Prostate gland (tissue), 2 donors: ENCODE measurements at regions of chr3 and their contacts with region 1.

Region 1: DNA sequence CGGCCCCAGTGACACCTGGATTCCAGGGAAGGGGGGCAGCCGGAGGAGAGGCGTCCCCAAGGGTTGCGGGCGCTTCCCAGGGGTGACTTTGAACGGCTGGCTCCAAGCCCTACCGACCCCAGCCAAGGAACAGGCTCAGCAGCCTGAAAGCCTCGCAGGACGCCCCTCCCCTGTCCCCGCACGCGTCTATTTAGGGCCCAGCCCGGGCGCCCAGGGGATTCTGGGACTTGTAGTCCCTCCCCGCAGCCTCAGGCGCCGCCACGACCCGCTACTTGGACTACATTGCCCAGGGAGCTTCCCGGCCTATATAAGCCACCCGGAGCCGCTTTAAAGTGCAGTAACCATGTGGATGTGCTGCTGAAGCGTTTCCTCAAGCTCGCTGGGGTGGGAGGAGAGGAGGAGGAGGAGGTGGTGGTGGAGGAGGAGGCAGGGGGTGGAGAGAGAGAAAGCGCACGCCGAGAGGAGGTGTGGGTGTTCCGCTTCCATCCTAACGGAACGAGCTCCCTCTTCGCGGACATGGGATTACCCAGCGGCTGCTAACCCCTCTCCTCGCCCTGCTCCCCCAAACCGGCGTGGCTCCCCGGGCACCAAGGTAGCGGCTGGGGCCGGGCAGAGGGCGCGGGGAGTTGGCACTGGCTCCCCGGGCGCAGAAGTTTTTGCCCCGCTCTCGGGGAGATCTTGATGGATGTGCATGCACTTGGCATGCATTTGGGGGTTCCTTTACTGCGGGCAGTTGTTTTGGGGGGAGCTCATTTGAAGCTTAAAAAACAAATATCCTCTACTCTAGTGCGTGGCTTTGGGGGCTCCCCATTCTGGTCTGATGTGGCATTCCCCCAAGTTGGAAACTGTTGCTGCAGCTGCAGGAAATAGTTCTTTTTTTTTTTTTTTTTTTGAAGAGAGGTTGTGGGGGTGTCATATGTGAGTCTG is at the start of gene ITPR1:
- DNase-seq: peak; percentile 98
- H3K4me3 ChIP-seq: peak within 1 kb of the TSS; percentile 71 to 72
- H3K27ac ChIP-seq: peak within 1 kb of the TSS; percentile 88 to 91
- H3K4me1 ChIP-seq: no peaks in the 10 kb centered on the region
- H3K27me3 ChIP-seq: no peaks in the 10 kb centered on the region
- CTCF ChIP-seq: peak in 2 of 4 experiments; percentile 33 to 49
- POLR2A ChIP-seq: peak; percentile 99
- total RNA-seq, gene ITPR1: 80.0 to 126 TPM

Region 2: GRCh38 chr3:4306860-4307259 is 186.4 kb before region 1 on chr3:
- intact Hi-C with region 1: loop called (anchors 5 kb)
- DNase-seq: peak; percentile 30
- H3K4me3 ChIP-seq: no peak overlapping the region
- H3K27ac ChIP-seq: peak overlapping the region; percentile 92 to 95
- H3K4me1 ChIP-seq: peaks cover 11% of the 10 kb centered on the region
- H3K27me3 ChIP-seq: no peaks in the 10 kb centered on the region
- CTCF ChIP-seq: no peak
- POLR2A ChIP-seq: no peak

Region 3: GRCh38 chr3:4350789-4351163 is 142.5 kb before region 1 on chr3:
- intact Hi-C with region 1: loop called (anchors 5 kb)
- DNase-seq: peak; percentile 53
- H3K4me3 ChIP-seq: no peak overlapping the region
- H3K27ac ChIP-seq: no peak overlapping the region
- H3K4me1 ChIP-seq: no peaks in the 10 kb centered on the region
- H3K27me3 ChIP-seq: no peaks in the 10 kb centered on the region
- CTCF ChIP-seq: peak; percentile 57 to 87 (median 64)
- POLR2A ChIP-seq: no peak

Region 4: GRCh38 chr3:4584456-4585249 is 91.4 kb after region 1 on chr3:
- intact Hi-C with region 1: loop called (anchors 2 kb)
- DNase-seq: no peak
- H3K4me3 ChIP-seq: peak overlapping the region in 1 of 2 donors; percentile 11
- H3K27ac ChIP-seq: peak overlapping the region; percentile 62 to 67
- H3K4me1 ChIP-seq: no peaks in the 10 kb centered on the region
- H3K27me3 ChIP-seq: no peaks in the 10 kb centered on the region
- CTCF ChIP-seq: peak in 2 of 4 experiments; percentile 11 to 26
- POLR2A ChIP-seq: no peak

Region 5: DNA sequence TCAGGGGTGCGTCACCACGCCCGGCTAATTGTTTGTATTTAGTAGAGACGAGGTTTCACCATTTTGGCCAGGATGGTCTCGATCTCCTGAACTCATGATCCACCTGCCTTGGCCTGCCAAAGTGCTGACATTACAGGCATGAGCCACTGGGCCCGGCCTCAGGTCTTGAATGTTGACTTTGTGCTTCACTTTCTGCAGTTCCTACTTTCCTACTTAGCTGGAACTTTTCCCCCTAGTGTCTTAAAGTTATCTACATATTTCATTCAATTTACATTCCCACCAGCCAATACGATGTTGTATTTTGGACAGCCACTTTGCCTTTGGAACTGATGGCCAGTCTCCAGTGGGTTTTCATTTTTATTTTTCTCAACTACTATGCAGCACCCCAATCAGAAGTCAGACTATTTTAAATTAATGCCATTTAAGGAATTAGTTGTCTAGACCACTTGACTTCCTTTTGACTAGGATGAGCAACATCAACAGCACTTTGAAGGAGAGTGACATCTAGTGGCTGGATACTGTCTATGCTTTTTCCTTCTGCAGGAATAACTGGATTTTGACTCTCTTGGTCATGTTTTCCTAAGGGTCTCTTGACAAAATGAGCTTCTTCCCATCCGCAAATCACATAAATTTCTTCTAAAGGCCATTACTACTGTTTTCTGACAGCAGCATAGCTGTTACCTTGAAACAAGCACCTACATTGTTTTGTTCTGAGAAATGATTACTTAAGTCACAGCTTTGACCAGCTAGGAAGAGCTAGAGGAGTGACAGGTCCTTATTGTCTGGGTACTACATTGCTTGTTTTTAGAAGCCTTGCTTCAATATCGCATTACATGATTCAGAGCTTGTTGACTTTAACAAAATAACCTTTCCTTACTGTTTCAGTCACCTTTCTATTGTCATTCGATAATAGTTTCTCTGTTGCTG is 140.1 kb after region 1 on chr3:
- intact Hi-C with region 1: loop called (anchors 5 kb)
- DNase-seq: no peak
- H3K4me3 ChIP-seq: no peak overlapping the region
- H3K27ac ChIP-seq: no peak overlapping the region
- H3K4me1 ChIP-seq: no peaks in the 10 kb centered on the region
- H3K27me3 ChIP-seq: no peaks in the 10 kb centered on the region
- CTCF ChIP-seq: peak; percentile 75 to 83 (median 78)
- POLR2A ChIP-seq: no peak

Region 6: DNA sequence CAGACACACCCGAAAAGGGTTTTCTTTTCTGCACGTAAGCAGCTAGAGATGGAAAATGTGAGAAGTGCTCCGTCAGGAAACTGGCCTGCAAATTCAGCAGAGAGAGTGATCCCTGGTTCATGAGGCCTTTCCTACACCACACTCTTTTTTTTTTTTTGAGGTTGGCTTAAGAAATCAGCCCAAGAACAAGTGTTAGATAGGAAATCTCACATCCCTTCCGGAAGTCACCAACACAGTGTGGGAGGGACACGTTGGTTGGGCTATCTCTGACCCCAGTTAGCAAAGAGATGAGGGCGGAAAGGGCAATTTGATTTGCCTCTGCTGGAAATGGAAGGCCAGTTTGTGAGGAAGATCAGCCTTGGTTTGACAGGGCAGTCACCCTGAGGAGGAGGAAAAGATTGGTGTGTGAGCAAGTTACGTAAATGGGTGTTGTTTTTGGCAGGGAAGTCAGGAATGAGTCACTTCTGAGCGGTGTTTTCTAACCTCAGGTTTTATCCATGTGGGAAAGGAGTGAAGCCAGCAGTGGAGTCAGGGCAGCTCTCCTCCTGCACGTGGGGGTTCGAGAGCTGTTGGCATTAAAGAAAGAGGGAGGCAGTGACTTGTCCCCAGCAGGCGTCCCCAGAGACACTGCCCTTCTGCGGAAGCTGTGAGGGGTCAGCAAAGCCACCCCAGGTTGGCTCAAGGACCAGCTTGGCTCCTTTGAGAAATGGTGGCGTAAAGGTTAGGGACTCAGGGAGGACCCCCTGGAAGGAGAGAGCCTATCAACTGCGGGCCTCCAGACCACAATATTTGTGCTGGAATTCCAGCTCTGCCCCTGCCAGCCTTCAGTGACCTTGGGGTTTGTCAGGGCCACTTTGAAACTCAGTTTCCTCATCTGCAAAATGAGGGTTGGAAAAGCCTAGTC is 248.4 kb after region 1 on chr3:
- intact Hi-C with region 1: no loop called
- DNase-seq: peak; percentile 88
- H3K4me3 ChIP-seq: no peak overlapping the region
- H3K27ac ChIP-seq: peak overlapping the region; percentile 80
- H3K4me1 ChIP-seq: peaks cover 11% of the 10 kb centered on the region
- H3K27me3 ChIP-seq: no peaks in the 10 kb centered on the region
- CTCF ChIP-seq: no peak
- POLR2A ChIP-seq: peak; percentile 67